Ascending aorta (tissue), 2 donors: ENCODE measurements at regions of chr1 and their contacts with region 1.

Region 1: DNA sequence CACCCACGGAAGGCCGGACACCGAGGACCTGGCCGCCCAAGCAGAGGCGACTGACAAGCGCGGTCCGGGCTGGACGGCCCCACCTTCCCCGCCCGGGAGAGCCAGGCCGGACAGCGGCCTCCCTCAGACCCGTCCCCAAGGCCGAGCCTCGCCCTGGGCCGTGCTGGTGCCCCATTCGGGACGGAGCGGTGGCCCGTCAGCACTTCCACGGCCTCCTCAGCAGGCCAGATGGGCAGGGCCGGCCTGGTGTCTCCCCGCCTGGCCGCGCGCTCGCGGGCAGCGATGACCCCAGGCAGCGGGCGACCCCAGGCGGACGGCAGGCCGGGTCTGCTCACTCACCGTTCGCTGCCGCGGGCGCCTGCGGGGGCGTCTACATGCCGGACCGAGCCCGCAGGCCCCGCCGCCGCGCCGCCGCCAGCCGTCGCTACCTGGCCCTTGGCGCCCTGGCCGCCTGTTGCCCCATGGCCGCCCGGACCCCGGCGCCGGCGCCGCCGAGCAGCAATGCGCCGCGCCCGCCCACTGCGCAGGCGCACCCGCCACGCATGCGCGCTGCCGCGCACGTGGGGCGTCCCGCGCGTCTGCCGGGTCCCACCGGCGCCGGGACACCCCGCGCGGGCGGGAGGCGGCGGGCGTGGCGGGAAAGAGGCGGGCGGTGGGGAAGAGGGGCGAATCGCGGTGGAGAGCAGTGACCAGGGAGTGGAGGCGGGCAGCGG is at the start of gene NADK:
- DNase-seq: peak in 1 of 2 donors; percentile 77
- H3K4me3 ChIP-seq: peak within 1 kb of the TSS; percentile 89 to 91
- H3K27ac ChIP-seq: peak within 1 kb of the TSS; percentile 92 to 95
- H3K4me1 ChIP-seq: peaks cover 13 to 51% of the 10 kb centered on the region in 2 donors
- H3K27me3 ChIP-seq: no peaks in the 10 kb centered on the region
- CTCF ChIP-seq: peak in 1 of 3 experiments; percentile 32
- total RNA-seq, gene NADK: 104 TPM

Region 2: DNA sequence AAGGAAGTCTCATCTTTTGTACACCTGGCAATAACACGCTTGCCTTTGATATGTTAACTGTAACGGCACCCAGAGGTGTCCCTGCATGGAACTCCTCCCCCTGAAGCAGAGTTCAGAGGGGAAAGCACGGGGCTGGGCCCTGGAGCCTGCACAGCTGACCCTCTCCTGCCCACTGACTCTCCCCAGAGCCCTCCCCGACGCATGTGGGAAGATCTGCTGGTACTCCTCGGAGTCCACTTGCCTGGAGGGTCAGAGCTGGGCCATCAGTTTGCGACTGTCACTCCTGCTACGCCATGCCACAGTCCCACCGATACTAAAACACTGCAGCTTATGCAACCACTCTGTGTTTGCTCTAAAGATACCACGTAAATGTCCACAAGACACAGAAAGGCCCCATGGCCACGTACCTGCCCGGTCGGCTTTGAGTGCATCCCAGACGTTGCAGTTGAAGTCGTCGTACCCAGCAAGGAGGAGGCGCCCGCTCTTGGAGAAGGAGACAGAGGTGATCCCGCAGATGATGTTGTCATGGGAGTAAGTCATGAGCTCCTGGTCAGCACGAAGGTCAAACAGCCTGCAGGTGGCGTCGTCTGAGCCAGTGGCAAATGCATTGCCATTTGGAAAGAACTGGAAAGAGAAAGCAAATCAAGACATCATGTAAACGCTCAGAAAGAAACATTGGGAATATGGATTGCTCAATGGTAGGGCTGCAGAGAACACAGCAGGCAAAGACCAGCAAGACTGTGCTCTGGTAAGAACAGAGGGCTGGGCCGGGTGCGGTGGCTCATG is 10.7 kb after region 1 on chr1:
- intact Hi-C with region 1: no loop called
- DNase-seq: no peak
- H3K4me3 ChIP-seq: no peak overlapping the region
- H3K27ac ChIP-seq: peak overlapping the region in 1 of 2 donors; percentile 55
- H3K4me1 ChIP-seq: peaks cover 0 to 4% of the 10 kb centered on the region in 2 donors
- H3K27me3 ChIP-seq: no peaks in the 10 kb centered on the region
- CTCF ChIP-seq: peak in 1 of 3 experiments; percentile 7

Region 3: DNA sequence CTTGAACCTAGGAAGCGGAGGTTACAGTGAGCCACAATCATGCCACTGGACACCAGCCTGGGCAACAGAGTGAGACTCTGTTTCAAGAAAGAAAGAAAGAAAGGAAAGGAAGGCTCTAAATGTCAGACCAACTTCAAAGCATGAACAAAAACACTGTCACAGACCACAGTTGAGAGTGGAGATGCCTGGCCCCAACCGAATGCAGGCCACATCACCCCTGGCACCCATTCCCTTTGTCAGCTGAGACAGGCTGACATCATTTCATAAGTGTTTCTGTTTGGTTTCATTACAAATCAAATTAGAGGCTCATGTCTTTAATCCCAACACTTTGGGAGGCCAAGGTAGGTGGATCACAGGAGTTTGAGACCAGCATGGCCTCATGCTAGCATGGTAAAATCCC is 28.8 kb after region 1 on chr1:
- intact Hi-C with region 1: loop called (anchors 2 kb)
- DNase-seq: peak in 1 of 2 donors; percentile 77
- H3K4me3 ChIP-seq: no peak overlapping the region
- H3K27ac ChIP-seq: peak overlapping the region; percentile 80
- H3K4me1 ChIP-seq: peaks cover 0 to 13% of the 10 kb centered on the region in 2 donors
- H3K27me3 ChIP-seq: no peaks in the 10 kb centered on the region
- CTCF ChIP-seq: no peak

Region 4: DNA sequence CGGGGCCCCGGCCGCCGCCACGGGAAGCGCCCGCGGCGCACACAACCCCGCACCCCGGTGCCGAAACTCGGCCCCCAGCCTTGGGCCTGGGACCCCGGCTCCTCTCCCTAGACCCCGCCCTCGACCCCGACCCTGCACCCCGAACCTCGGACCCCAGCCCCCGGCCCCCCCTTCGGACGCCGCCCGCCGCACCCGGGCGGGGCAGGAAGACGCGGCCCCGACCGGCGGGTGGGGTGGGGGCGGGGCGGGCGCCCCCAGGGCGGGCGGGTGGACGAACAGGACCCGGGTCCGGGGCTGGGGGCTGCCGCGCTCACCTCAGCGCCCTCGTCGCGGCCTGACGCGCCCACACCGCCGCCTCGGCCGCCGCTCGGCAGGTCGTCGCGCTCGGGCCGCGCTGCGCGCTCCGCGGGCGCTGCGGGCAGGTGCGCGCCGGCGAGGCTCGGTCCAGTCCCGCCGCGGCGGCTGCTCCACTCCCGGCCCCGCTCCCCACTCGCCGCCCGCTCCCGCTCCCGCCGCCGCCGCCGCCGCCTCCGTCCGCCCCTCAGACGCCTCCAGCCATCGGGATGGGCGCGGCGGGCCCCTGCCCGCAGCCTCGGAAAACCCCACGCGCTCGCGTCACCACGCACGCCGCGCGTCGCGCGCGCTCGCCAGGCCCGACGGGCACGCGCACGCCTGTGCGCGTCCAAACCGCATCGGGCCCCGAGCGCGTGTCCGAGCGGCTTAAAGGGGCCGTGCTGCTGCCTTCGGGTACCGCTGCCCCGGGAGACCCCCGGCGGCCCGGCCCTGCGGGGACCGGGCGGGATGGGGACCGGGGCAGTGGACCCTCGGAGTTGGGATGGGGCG is 112.6 kb after region 1 on chr1 and contains the start of gene GNB1:
- intact Hi-C with region 1: loop called (anchors 1 kb)
- DNase-seq: peak; percentile 54 to 92
- H3K4me3 ChIP-seq: peak within 1 kb of the TSS; percentile 83 to 95
- H3K27ac ChIP-seq: peak within 1 kb of the TSS; percentile 93 to 94
- H3K4me1 ChIP-seq: peaks cover 0 to 48% of the 10 kb centered on the region in 2 donors
- H3K27me3 ChIP-seq: no peaks in the 10 kb centered on the region
- CTCF ChIP-seq: no peak
- total RNA-seq, gene GNB1: 170 TPM